B cell (primary cell): ENCODE measurements at regions of chr10 and their contacts with region 1.

Region 1: DNA sequence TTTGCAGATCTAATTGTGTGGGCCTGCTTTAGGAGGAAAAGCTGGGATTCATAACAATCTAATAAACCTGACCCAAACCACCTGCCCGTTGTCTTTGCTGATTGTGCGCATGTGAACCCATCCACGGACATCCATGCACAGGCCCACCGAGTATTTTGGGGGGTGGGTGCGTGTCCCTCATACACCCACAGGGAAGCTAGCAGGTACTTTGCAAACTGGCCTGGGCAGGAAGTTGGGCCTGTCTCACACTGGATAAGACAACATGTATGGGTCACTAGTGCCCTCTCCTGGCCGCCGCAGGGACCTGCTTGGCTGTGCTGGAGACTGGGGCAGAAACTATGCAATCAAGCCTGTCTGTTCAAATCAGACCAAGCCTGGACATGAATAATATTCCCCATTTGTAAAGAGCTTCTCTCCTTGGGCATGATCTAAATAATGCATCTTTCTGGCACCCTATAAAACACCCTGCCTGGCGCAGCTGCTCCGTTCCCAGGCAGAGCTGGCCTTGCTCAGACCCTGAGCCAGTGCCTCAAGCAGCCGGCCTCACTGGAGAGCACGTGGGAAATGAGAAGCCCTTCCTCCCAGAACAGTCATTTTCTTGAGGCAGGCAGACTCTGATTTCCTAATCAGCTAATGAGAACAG is 15.8 kb downstream of the ECHDC3 start:
- DNase-seq: peak; percentile 85
- ATAC-seq: peak; percentile 98
- H3K4me3 ChIP-seq: no peak overlapping the region
- H3K4me3 Mint-ChIP-seq: no peak overlapping the region
- H3K27ac ChIP-seq: no peak overlapping the region
- H3K27ac Mint-ChIP-seq: peak overlapping the region; percentile 72
- H3K4me1 ChIP-seq: peaks cover 0 to 7% of the 10 kb centered on the region in 2 donors
- H3K4me1 Mint-ChIP-seq: peaks cover 6% of the 10 kb centered on the region
- H3K27me3 ChIP-seq: no peaks in the 10 kb centered on the region
- H3K27me3 Mint-ChIP-seq: no peaks in the 10 kb centered on the region
- CTCF ChIP-seq: peak; percentile 90

Region 2: GRCh38 chr10:11424456-11425297 is 333.3 kb before region 1 on chr10:
- CTCF ChIA-PET with region 1: interaction called, 25 read pairs
- POLR2A ChIA-PET with region 1: no interaction called
- intact Hi-C with region 1: loop called (anchors 1 kb)
- DNase-seq: peak; percentile 28
- ATAC-seq: no peak
- H3K4me3 ChIP-seq: no peak overlapping the region
- H3K4me3 Mint-ChIP-seq: no peak overlapping the region
- H3K27ac ChIP-seq: no peak overlapping the region
- H3K27ac Mint-ChIP-seq: no peak overlapping the region
- H3K4me1 ChIP-seq: no peaks in the 10 kb centered on the region
- H3K4me1 Mint-ChIP-seq: no peaks in the 10 kb centered on the region
- H3K27me3 ChIP-seq: no peaks in the 10 kb centered on the region
- H3K27me3 Mint-ChIP-seq: no peaks in the 10 kb centered on the region
- CTCF ChIP-seq: peak; percentile 65

Region 3: GRCh38 chr10:11488126-11488525 is 269.8 kb before region 1 on chr10:
- CTCF ChIA-PET with region 1: interaction called, 32 read pairs
- POLR2A ChIA-PET with region 1: no interaction called
- intact Hi-C with region 1: no loop called
- DNase-seq: no peak
- ATAC-seq: no peak
- H3K4me3 ChIP-seq: no peak overlapping the region
- H3K4me3 Mint-ChIP-seq: no peak overlapping the region
- H3K27ac ChIP-seq: peak overlapping the region in 1 of 2 donors; percentile 16
- H3K27ac Mint-ChIP-seq: peak overlapping the region; percentile 70
- H3K4me1 ChIP-seq: peaks cover 5 to 8% of the 10 kb centered on the region in 2 donors
- H3K4me1 Mint-ChIP-seq: peaks cover 17% of the 10 kb centered on the region
- H3K27me3 ChIP-seq: no peaks in the 10 kb centered on the region
- H3K27me3 Mint-ChIP-seq: no peaks in the 10 kb centered on the region
- CTCF ChIP-seq: no peak

Region 4: GRCh38 chr10:11515596-11516430 is 242.1 kb before region 1 on chr10:
- CTCF ChIA-PET with region 1: interaction called, 95 read pairs
- POLR2A ChIA-PET with region 1: interaction called, 5 read pairs
- intact Hi-C with region 1: loop called (anchors 1 kb)
- DNase-seq: peak; percentile 79
- ATAC-seq: peak; percentile 84
- H3K4me3 ChIP-seq: peak overlapping the region in 1 of 5 experiments; percentile 2
- H3K4me3 Mint-ChIP-seq: peak overlapping the region; percentile 18
- H3K27ac ChIP-seq: peak overlapping the region in 1 of 2 donors; percentile 48
- H3K27ac Mint-ChIP-seq: peak overlapping the region; percentile 80
- H3K4me1 ChIP-seq: peaks cover 22% of the 10 kb centered on the region in 2 donors
- H3K4me1 Mint-ChIP-seq: peaks cover 46% of the 10 kb centered on the region
- H3K27me3 ChIP-seq: no peaks in the 10 kb centered on the region
- H3K27me3 Mint-ChIP-seq: no peaks in the 10 kb centered on the region
- CTCF ChIP-seq: peak; percentile 97

Region 5: GRCh38 chr10:11724938-11725776 is 32.8 kb before region 1 on chr10:
- CTCF ChIA-PET with region 1: interaction called, 24 read pairs
- POLR2A ChIA-PET with region 1: no interaction called
- intact Hi-C with region 1: loop called (anchors 1 kb)
- DNase-seq: peak; percentile 79
- ATAC-seq: peak; percentile 87
- H3K4me3 ChIP-seq: no peak overlapping the region
- H3K4me3 Mint-ChIP-seq: peak overlapping the region; percentile 27
- H3K27ac ChIP-seq: no peak overlapping the region
- H3K27ac Mint-ChIP-seq: peak overlapping the region; percentile 72
- H3K4me1 ChIP-seq: peaks cover 19 to 24% of the 10 kb centered on the region in 2 donors
- H3K4me1 Mint-ChIP-seq: peaks cover 27% of the 10 kb centered on the region
- H3K27me3 ChIP-seq: no peaks in the 10 kb centered on the region
- H3K27me3 Mint-ChIP-seq: no peaks in the 10 kb centered on the region
- CTCF ChIP-seq: peak; percentile 86

Region 6: DNA sequence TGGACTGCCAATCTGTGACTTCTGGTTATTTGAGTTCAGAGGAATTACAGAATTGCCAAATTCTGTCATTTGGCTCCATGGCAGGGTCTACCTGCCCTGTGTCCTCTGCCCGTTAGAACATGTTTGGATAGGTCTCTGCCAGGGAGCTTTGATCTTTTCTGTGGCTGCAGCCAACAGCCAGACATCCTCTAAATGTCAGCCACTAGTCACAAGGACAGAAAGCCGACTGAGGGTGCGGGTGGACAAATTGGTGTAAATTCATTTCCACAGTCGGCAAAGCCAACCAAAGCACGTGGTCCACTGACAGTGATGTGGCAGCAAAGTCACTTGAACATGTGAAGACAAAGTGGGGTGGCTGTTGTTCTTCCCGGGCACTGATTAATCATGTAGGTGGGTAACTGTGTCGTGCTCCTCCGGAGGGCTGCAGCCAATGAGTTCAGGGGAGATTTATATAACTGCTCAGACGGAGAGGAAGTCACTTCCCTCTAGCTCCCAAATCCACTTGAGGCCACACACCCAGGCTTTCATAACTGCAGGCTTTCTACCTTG is 564.7 kb after region 1 on chr10:
- CTCF ChIA-PET with region 1: no interaction called
- POLR2A ChIA-PET with region 1: no interaction called
- intact Hi-C with region 1: no loop called
- DNase-seq: no peak
- ATAC-seq: no peak
- H3K4me3 ChIP-seq: no peak overlapping the region
- H3K4me3 Mint-ChIP-seq: no peak overlapping the region
- H3K27ac ChIP-seq: no peak overlapping the region
- H3K27ac Mint-ChIP-seq: no peak overlapping the region
- H3K4me1 ChIP-seq: peaks cover 4 to 15% of the 10 kb centered on the region in 2 donors
- H3K4me1 Mint-ChIP-seq: peaks cover 29% of the 10 kb centered on the region
- H3K27me3 ChIP-seq: no peaks in the 10 kb centered on the region
- H3K27me3 Mint-ChIP-seq: no peaks in the 10 kb centered on the region
- CTCF ChIP-seq: no peak